ENCODE measurements at regions of chr14 and their contacts with region 1.

Region 1: DNA sequence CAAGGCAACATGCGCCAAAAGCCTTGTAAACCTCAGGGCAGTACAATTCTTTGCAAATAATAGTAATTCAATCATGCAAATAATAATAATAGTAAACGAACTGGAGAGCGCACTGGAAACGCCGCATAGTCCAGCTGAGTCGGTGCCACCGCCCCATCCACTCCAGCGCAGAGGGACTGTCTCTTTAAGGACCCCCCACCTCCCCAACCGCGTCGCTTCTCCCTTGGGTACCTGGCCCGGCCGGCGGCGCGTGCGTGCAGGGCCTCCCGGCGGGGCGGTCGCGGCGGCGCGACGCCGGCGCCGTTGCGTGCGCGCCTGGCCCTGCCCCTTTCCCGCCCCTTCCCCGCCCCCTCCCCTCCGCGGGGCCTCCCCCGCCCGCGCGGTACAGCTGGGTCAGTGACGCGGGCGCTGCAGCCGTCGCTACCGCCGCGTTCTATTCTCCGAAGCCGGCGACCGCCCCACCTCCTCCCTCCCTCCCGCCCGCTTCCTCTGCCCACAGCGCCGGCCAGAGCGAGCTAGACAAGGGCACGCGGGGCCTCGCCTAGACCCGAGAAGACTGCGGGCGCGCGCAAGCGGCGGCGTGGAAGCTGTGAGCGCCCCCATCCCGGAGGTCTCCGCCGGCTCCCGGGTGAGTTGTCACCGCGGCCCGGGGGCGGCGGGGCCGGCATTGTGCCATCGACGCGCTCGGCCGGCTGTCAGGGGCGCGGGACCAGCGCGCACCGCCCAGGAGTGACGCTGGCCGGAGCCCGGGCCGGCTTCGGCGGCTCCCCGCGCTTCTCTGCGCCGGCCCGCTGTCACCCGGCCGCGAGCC is at the start of gene SUSD6:
- DNase-seq: peak; percentile 85
- H3K4me3 ChIP-seq: peak within 1 kb of the TSS; percentile 94 to 97 (median 96)
- H3K27ac ChIP-seq: peak within 1 kb of the TSS; percentile 89
- H3K4me1 ChIP-seq: peaks cover 34% of the 10 kb centered on the region
- H3K27me3 ChIP-seq: no peaks in the 10 kb centered on the region
- CTCF ChIP-seq: no peak
- POLR2A ChIP-seq: peak; percentile 14
- total RNA-seq, gene SUSD6: 19.5 and 29.0 TPM in 2 replicates

Region 2: GRCh38 chr14:69586404-69586803 is 25.0 kb before region 1 on chr14:
- CTCF ChIA-PET with region 1: interaction called, 135 read pairs
- POLR2A ChIA-PET with region 1: no interaction called
- dilution Hi-C with region 1: no loop called
- intact Hi-C with region 1: loop called (anchors 1 kb)
- DNase-seq: peak; percentile 90
- H3K4me3 ChIP-seq: no peak overlapping the region
- H3K27ac ChIP-seq: no peak overlapping the region
- H3K4me1 ChIP-seq: peaks cover 20% of the 10 kb centered on the region
- H3K27me3 ChIP-seq: no peaks in the 10 kb centered on the region
- CTCF ChIP-seq: no peak
- POLR2A ChIP-seq: no peak

Region 3: DNA sequence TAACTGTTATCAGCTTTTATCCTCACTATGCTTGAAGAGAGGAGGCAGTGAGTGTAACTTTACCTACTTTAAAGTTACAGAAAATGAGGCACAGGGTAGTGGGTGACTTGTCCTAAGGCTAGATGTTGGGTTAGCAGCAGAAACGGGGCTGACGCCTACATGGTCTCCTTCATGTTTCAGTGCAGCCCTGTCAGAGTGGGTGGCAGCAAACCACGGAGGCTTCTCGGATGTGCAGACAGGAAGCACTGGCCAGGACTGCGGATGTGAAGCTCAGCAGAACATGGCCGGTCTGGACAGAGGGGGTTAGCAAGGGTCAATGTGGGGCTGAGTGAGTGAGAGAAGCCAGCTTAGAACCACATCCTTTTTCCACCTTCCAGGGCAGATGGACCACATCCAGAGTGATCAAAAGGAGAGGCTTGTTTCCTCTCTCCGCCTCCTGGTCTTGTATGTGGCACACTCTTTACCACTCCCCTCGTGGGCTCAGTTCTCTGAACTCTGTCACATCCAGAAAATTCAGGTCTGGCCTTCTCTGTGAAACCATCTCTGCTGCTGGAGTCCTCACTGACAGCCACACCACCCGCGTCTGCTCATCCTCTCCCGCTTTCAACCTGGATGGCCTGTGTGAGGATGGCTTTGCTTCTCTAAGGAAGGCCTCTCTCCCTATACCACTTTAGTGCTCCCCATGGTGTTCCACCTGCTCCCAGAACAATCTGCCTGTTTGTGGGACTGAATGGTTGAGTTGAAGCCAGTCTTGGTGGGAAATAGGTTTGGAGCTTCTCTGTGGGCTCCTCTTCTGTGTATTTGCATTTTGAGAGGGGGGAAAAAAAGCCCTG is 14.1 kb after region 1 on chr14:
- CTCF ChIA-PET with region 1: interaction called, 5 read pairs
- POLR2A ChIA-PET with region 1: no interaction called
- dilution Hi-C with region 1: no loop called
- intact Hi-C with region 1: loop called (anchors 1 kb)
- DNase-seq: peak; percentile 78
- H3K4me3 ChIP-seq: no peak overlapping the region
- H3K27ac ChIP-seq: peak overlapping the region; percentile 54
- H3K4me1 ChIP-seq: peaks cover 18% of the 10 kb centered on the region
- H3K27me3 ChIP-seq: no peaks in the 10 kb centered on the region
- CTCF ChIP-seq: no peak
- POLR2A ChIP-seq: peak; percentile 44

Region 4: GRCh38 chr14:69650948-69651369 is 39.6 kb after region 1 on chr14:
- CTCF ChIA-PET with region 1: interaction called, 4 read pairs
- POLR2A ChIA-PET with region 1: no interaction called
- dilution Hi-C with region 1: no loop called
- intact Hi-C with region 1: loop called (anchors 2 kb)
- DNase-seq: peak; percentile 64
- H3K4me3 ChIP-seq: no peak overlapping the region
- H3K27ac ChIP-seq: peak overlapping the region; percentile 30
- H3K4me1 ChIP-seq: peaks cover 43% of the 10 kb centered on the region
- H3K27me3 ChIP-seq: no peaks in the 10 kb centered on the region
- CTCF ChIP-seq: no peak
- POLR2A ChIP-seq: no peak

Region 5: DNA sequence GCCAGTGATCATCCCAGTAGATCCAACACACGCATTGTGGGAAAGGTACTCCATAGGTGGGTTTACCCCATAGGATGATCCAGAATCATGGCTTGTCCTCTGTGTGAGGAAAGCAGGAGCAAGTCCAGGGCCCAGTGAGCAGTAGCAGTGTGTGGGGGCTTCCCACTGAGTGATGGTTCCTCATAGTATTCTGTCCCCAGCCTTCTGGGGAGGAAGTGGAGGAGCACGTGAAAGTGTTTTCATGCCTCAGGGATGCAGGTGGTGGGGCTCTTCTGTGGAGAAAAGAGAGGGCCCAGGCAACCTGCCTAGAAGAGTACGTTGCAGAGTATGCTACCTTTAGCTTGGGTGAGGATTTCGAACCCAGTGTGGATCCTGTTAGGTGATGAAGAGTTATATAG is 56.5 kb after region 1 on chr14:
- CTCF ChIA-PET with region 1: interaction called, 3 read pairs
- POLR2A ChIA-PET with region 1: no interaction called
- dilution Hi-C with region 1: no loop called
- intact Hi-C with region 1: loop called (anchors 1 kb)
- DNase-seq: no peak
- H3K4me3 ChIP-seq: no peak overlapping the region
- H3K27ac ChIP-seq: no peak overlapping the region
- H3K4me1 ChIP-seq: peaks cover 9% of the 10 kb centered on the region
- H3K27me3 ChIP-seq: no peaks in the 10 kb centered on the region
- CTCF ChIP-seq: no peak
- POLR2A ChIP-seq: no peak

Region 6: GRCh38 chr14:69695322-69696203 is 84.2 kb after region 1 on chr14:
- CTCF ChIA-PET with region 1: no interaction called
- POLR2A ChIA-PET with region 1: no interaction called
- dilution Hi-C with region 1: no loop called
- intact Hi-C with region 1: no loop called
- DNase-seq: peak; percentile 79
- H3K4me3 ChIP-seq: no peak overlapping the region
- H3K27ac ChIP-seq: no peak overlapping the region
- H3K4me1 ChIP-seq: peaks cover 4% of the 10 kb centered on the region
- H3K27me3 ChIP-seq: no peaks in the 10 kb centered on the region
- CTCF ChIP-seq: no peak
- POLR2A ChIP-seq: no peak

Region 7: DNA sequence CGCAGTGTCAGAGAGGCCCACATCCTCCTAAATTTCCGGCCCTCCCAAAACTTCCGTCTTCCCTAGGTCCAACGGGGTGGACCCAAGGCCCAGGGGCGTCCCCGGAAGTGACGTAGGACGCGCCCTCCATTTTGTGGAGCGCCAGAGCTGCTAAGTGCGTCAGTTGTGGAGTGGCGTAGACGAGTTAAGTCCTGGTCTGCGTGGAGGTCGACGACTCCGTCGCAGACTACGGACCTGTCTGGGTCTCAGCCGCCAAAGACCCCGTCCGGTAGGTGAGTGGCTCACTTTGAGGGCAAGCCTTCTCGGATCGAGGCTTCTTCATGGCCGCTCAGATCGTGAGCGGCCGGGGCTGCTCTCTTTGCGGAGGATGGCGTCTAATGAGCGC is 155.6 kb after region 1 on chr14 and contains the start of gene SRSF5:
- CTCF ChIA-PET with region 1: no interaction called
- POLR2A ChIA-PET with region 1: interaction called, 4 read pairs
- dilution Hi-C with region 1: no loop called
- intact Hi-C with region 1: loop called (anchors 1 kb)
- DNase-seq: peak; percentile 97
- H3K4me3 ChIP-seq: peak within 1 kb of the TSS; percentile 24 to 98 (median 76)
- H3K27ac ChIP-seq: peak within 1 kb of the TSS; percentile 88
- H3K4me1 ChIP-seq: peaks cover 27% of the 10 kb centered on the region
- H3K27me3 ChIP-seq: no peaks in the 10 kb centered on the region
- CTCF ChIP-seq: no peak
- POLR2A ChIP-seq: peak; percentile 99
- total RNA-seq, gene SRSF5: 253 and 276 TPM in 2 replicates